GM12878 (cell line): ENCODE measurements at regions of chr1 and their contacts with region 1.

Region 1: GRCh38 chr1:23098463-23099170 is 70.0 kb downstream of the LUZP1 start:
- DNase-seq: no peak
- ATAC-seq: peak; percentile 78
- H3K4me3 ChIP-seq: no peak overlapping the region
- H3K27ac ChIP-seq: no peak overlapping the region
- H3K4me1 ChIP-seq: no peaks in the 10 kb centered on the region
- H3K27me3 ChIP-seq: no peaks in the 10 kb centered on the region
- CTCF ChIP-seq: peak; percentile 88 to 98 (median 90)
- EP300 ChIP-seq: no peak
- POLR2A ChIP-seq: no peak
- RAD21 ChIP-seq: peak; percentile 98

Region 2: DNA sequence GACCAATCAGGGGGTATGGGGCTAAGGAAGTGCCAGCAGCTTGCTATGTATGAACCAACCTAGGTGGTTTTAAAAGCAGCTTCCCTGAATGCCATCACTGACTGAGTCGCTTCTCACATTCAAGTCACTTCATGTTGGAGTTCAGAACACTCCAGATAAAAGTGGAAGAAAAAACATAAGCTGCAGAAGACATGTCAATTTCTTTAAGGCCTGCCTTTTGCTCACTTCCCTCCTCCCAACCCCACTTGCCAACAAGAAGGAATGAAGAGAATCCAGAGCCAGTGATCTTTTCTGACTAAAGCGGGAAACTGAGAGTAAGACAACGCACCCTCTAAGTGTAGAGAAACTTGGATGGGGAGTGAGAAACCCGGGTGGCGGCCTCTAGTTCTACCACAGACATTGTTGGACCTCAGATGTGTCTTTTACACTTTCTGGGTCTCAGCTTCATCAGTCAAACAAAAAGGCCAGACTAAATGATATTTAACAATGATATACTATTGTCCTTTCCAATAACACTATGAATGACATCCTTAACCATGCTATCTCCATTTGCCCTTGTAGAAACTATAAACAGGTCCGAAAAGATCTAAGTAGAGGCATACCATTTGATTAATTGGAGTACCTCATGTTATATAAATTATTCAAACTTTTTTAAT is 15.9 kb after region 1 on chr1:
- CTCF ChIA-PET with region 1: interaction called, 93 read pairs
- POLR2A ChIA-PET with region 1: interaction called, 8 read pairs
- RAD21 ChIA-PET with region 1: interaction called, 66 read pairs
- SMC1A ChIA-PET with region 1: interaction called, 188 read pairs
- in situ Hi-C with region 1: no loop called
- intact Hi-C with region 1: no loop called
- DNase-seq: no peak
- ATAC-seq: peak; percentile 59
- H3K4me3 ChIP-seq: peak overlapping the region; percentile 9; the same call in 1 of the 2 replicates
- H3K27ac ChIP-seq: peak overlapping the region; percentile 64
- H3K4me1 ChIP-seq: peaks cover 54% of the 10 kb centered on the region
- H3K27me3 ChIP-seq: no peaks in the 10 kb centered on the region
- CTCF ChIP-seq: no peak
- EP300 ChIP-seq: no peak
- POLR2A ChIP-seq: no peak
- RAD21 ChIP-seq: no peak

Region 3: GRCh38 chr1:23132033-23132432 is 33.4 kb after region 1 on chr1:
- CTCF ChIA-PET with region 1: interaction called, 9 read pairs
- POLR2A ChIA-PET with region 1: interaction called, 10 read pairs
- RAD21 ChIA-PET with region 1: interaction called, 8 read pairs
- SMC1A ChIA-PET with region 1: interaction called, 16 read pairs
- in situ Hi-C with region 1: no loop called
- intact Hi-C with region 1: no loop called
- DNase-seq: no peak
- ATAC-seq: no peak
- H3K4me3 ChIP-seq: no peak overlapping the region
- H3K27ac ChIP-seq: no peak overlapping the region
- H3K4me1 ChIP-seq: no peaks in the 10 kb centered on the region
- H3K27me3 ChIP-seq: no peaks in the 10 kb centered on the region
- CTCF ChIP-seq: no peak
- EP300 ChIP-seq: no peak
- POLR2A ChIP-seq: no peak
- RAD21 ChIP-seq: no peak

Region 4: GRCh38 chr1:23163395-23163794 is 64.8 kb after region 1 on chr1:
- CTCF ChIA-PET with region 1: interaction called, 41 read pairs
- POLR2A ChIA-PET with region 1: interaction called, 5 read pairs
- RAD21 ChIA-PET with region 1: interaction called, 13 read pairs
- SMC1A ChIA-PET with region 1: interaction called, 65 read pairs
- in situ Hi-C with region 1: no loop called
- intact Hi-C with region 1: no loop called
- DNase-seq: no peak
- ATAC-seq: no peak
- H3K4me3 ChIP-seq: no peak overlapping the region
- H3K27ac ChIP-seq: no peak overlapping the region
- H3K4me1 ChIP-seq: no peaks in the 10 kb centered on the region
- H3K27me3 ChIP-seq: no peaks in the 10 kb centered on the region
- CTCF ChIP-seq: no peak
- EP300 ChIP-seq: no peak
- POLR2A ChIP-seq: no peak
- RAD21 ChIP-seq: no peak

Region 5: DNA sequence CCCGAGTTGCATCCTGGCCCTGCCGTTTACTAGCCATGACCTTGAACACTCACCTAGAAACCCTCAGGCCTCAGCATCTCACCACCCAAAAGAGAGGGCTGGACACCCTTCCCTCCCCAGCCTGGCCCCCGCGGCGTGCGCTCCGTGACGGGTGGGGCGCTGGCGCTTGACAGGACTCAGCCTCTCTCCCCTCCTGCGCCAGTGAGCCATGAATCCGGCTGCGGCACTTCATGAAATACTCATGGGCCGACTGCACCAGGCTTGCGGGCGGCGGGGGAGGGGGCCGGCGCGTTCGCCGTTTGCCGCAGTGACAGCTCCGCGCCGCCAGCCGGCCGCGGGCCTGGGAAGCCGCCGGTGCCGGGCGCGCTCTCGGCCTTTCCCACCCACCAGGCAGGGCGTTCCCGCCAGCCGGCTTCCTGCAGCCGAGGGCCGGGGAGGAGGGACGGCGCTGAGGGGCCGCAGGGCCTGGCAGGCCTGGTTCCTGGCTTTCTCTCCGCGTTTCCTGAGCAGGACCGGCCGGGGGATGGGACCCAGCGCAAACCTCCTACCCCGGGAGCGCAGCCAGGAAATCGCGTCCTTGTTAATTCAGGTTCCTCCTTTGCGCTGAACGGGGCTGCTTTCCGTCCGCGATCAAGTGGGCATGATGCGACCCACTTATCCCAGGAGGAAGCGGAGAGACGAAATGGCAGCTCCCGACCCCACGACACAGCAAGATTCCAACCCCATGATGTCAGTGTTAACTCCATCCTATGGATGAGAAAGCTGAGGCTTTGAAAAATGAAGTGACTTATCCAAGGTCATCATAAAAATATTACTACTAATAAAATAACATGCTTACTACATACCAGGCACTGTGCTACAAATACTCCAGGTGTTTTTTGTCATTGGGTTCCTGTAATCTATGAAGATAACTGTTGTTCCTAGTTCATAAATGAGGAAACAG is 79.1 kb after region 1 on chr1:
- CTCF ChIA-PET with region 1: interaction called, 961 read pairs
- POLR2A ChIA-PET with region 1: interaction called, 5 read pairs
- RAD21 ChIA-PET with region 1: interaction called, 338 read pairs
- SMC1A ChIA-PET with region 1: interaction called, 455 read pairs
- in situ Hi-C with region 1: no loop called
- intact Hi-C with region 1: no loop called
- DNase-seq: peak; percentile 46
- ATAC-seq: peak; percentile 94
- H3K4me3 ChIP-seq: peak overlapping the region; percentile 62
- H3K27ac ChIP-seq: peak overlapping the region; percentile 47
- H3K4me1 ChIP-seq: peaks cover 19% of the 10 kb centered on the region
- H3K27me3 ChIP-seq: no peaks in the 10 kb centered on the region
- CTCF ChIP-seq: 0 out of 6 replicates have a peak, but pooled peaks of 1 of the 3 experiments have one; percentile 1
- EP300 ChIP-seq: peak in 1 of 2 experiments; percentile 30; a peak in 1 of 4 replicates
- POLR2A ChIP-seq: peak; percentile 50
- RAD21 ChIP-seq: no peak

Region 6: DNA sequence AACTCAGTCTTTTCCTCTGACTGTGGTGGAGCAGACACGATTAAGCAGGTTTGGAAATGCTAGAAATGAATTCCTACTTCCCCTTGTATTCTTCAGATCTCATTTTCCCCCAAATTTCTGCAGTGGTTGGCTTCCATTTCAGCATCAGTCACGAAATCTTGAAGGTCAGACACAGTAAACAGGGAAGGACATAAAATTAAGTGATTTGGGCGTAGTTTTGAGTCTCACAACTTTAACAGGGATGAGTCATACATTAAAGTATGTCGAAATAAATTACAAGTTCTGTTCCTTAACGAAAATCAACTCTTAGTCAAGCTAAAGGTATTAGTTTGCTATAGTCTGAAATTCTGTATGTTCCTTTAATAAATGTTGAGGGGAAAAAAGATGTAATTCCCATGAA is 184.3 kb after region 1 on chr1:
- CTCF ChIA-PET with region 1: interaction called, 4 read pairs
- POLR2A ChIA-PET with region 1: no interaction called
- RAD21 ChIA-PET with region 1: interaction called, 4 read pairs
- SMC1A ChIA-PET with region 1: interaction called, 4 read pairs
- in situ Hi-C with region 1: loop called (anchors 5 kb)
- intact Hi-C with region 1: loop called (anchors 5 kb)
- DNase-seq: no peak
- ATAC-seq: no peak
- H3K4me3 ChIP-seq: no peak overlapping the region
- H3K27ac ChIP-seq: no peak overlapping the region
- H3K4me1 ChIP-seq: no peaks in the 10 kb centered on the region
- H3K27me3 ChIP-seq: no peaks in the 10 kb centered on the region
- CTCF ChIP-seq: no peak
- EP300 ChIP-seq: no peak
- POLR2A ChIP-seq: no peak
- RAD21 ChIP-seq: no peak